ENCODE measurements at regions of chr4 and their contacts with region 1.

Region 1: DNA sequence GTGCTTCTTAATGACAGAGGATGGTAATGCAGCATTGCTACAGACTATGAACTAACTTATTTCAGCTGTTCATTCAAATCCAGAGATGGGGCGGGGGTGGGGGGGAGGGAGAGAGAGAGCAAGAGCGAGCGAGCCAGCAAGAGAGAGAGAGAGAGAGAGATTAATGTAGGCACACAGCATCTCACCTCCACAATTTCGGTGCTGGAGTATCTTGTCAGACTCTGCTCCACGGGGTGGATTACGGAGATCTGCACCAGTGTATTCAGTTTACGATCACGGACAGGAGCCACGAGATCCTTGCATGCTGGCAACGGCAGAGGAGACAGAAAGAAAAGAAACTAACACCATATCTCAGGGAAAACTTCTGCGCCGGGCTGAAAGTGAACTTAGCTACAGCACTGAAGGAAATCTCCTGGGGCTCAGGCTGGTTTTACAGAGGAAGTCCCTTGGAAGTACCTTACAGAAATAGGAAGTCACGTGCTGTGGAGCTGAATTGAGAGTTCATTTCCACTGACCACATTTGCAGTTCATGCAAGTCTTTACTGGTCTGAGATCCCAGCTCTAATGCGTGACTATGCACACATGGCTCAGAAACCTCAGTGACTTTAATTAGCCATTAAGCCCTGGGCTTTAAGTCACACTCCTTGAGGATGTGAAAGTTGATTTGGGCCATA is 440.9 kb downstream of the INPP4B start:
- DNase-seq: peak; percentile 64
- H3K4me3 Mint-ChIP-seq: peak overlapping the region; percentile 96
- H3K27ac Mint-ChIP-seq: peak overlapping the region; percentile 99
- H3K4me1 Mint-ChIP-seq: peaks cover 45% of the 10 kb centered on the region
- H3K27me3 Mint-ChIP-seq: no peaks in the 10 kb centered on the region

Region 2: DNA sequence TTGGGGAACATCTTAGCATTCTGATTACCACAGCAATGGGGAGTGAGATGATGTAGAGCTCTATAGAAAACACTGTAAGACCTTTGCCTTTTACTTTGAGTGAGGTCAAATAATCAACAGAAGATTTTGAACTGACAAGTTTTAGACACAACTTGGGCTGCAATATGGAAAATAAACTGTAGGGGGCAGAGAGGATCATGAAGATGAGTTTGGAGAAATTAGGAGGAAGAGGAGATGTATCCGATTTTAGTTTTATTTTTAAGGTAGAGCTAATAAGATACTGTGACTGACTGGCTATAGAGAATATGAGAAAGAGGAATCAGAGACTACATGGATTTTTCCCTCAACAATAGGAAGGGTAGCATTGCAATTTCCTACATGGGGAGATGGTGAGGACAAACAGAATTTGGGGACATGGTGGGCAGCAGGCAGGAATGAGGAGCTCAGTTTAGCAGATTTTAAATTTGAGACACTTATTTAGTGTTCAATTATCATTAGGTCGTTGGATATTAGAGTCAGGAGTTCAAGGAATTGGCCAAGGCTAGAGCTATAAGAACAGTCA is 122.2 kb before region 1 on chr4:
- intact Hi-C with region 1: loop called (anchors 5 kb)
- DNase-seq: no peak
- H3K4me3 Mint-ChIP-seq: no peak overlapping the region
- H3K27ac Mint-ChIP-seq: no peak overlapping the region
- H3K4me1 Mint-ChIP-seq: peaks cover 15% of the 10 kb centered on the region
- H3K27me3 Mint-ChIP-seq: no peaks in the 10 kb centered on the region

Region 3: DNA sequence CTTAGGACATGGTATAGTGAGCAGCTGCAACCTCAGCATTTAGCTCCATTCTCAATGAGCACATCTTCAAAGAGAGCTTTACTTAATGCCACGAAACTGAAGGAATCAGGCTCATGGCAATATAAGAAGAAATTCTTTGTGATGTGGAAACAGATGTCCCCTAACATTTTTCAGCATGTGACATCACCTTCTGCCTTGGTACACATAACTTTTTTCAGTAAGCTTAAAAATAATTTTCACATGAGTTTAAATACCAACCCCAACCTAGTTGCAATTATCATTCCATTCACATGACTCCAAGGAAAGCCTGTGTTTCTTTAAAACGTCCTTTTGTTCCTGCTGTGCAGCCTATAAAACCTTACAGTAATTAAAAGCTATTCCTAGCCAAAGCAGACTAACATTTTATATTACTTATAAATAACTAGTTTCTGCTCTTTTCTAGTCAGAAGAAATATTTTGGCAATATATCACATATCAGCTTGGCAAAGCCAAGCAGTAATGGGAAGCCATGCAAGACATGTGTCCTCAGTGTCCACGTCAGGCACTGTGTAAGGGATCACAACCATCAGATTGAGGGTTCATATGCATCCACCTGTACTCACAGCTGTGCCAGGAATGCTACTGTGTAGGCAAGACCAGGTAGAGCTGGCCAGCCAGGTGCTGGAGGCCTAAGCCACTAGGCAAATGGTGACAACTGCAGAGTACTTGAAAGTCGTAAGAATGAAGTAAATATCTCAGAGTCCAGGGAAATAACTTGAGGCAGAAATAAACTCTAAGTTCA is 25.7 kb before region 1 on chr4:
- intact Hi-C with region 1: loop called (anchors 1 kb)
- DNase-seq: no peak
- H3K4me3 Mint-ChIP-seq: no peak overlapping the region
- H3K27ac Mint-ChIP-seq: peak overlapping the region; percentile 76
- H3K4me1 Mint-ChIP-seq: peaks cover 71% of the 10 kb centered on the region
- H3K27me3 Mint-ChIP-seq: no peaks in the 10 kb centered on the region

Region 4: GRCh38 chr4:142549726-142550463 is 144.7 kb after region 1 on chr4:
- intact Hi-C with region 1: loop called (anchors 1 kb)
- DNase-seq: no peak
- H3K4me3 Mint-ChIP-seq: no peak overlapping the region
- H3K27ac Mint-ChIP-seq: peak overlapping the region; percentile 68
- H3K4me1 Mint-ChIP-seq: peaks cover 59% of the 10 kb centered on the region
- H3K27me3 Mint-ChIP-seq: no peaks in the 10 kb centered on the region

Region 5: DNA sequence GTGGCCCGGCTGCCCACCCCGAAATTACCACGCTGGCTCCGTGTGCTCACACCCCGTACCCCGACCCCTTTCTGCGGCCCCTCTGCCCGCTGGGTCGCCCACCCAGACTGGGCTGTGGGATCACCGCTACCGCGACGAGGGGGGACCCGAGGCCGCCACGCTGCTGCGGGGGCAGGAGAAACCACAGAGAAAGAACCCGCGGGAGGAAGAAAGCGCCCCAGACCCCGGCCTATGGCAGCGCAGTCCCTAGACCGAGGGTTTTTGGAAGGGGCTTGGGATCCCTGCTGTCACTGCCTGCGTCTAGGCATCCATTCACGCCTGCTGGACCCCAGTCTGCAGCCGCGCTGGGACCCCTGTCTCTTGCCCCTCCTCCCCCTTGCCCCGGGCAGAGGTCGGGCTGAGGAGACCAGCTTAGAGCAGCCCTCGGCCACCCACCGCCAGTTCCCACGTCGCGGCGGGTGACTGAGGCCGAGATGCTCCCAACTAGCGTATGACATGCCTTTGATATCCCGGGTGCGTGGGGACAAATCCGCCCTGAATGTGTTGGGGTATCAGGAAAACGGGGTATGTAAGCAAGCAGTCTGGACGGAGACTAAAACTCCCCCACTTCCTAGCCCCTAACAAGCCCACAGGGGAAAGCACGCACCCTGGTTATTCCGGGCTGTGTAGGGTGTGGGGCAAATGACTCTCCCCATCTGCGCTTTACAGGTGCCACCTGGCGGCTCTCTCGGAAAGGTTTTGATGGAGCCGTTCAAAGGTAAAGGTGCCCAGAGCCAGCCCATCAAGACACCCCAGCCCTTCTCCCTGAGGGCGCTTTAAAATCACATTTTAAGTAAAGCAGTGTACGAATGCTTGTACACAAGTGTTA is 441.8 kb after region 1 on chr4:
- intact Hi-C with region 1: loop called (anchors 2 kb)
- DNase-seq: peak; percentile 62
- H3K4me3 Mint-ChIP-seq: peak overlapping the region; percentile 86
- H3K27ac Mint-ChIP-seq: peak overlapping the region; percentile 76
- H3K4me1 Mint-ChIP-seq: peaks cover 26% of the 10 kb centered on the region
- H3K27me3 Mint-ChIP-seq: peaks cover 36% of the 10 kb centered on the region

Measured in activated T-helper 2 cell treated with anti-CD3 and anti-CD28 coated beads, Interferon-gamma antibody, Interleukin-2, Interleukin-4, amounts not matched to agents 10 μg/mL and 5 μg/mL and 100 μg/mL, durations not matched to agents 14 hours and 24 hours and 36 hours (primary cell).